Right ventricle myocardium inferior (tissue), 1 donor: ENCODE measurements at regions of chr18 and their contacts with region 1.

Region 1: GRCh38 chr18:63963615-63964256 is 6.1 kb upstream of the SERPINB8 start:
- DNase-seq: no peak
- ATAC-seq: no peak

Region 2: DNA sequence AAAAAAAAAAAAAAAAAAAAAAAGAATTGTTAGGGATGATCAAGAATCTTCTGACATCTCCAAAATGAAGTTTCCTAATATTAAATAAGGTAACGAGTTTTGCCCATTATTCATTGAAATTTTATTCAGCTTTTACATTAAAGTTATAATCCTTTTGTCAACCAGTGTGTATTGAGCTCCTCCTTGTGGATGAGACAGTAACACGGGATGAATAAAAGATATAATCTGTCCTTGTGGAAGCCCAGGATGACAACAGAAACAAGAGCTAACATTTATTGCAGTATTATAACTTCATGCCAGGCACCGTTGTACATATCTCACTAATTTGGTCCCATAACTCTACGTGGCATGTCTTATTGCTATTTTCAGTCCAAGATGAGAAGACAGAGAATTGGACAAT is 222.0 kb before region 1 on chr18:
- intact Hi-C with region 1: no loop called
- DNase-seq: no peak
- ATAC-seq: no peak

Region 3: DNA sequence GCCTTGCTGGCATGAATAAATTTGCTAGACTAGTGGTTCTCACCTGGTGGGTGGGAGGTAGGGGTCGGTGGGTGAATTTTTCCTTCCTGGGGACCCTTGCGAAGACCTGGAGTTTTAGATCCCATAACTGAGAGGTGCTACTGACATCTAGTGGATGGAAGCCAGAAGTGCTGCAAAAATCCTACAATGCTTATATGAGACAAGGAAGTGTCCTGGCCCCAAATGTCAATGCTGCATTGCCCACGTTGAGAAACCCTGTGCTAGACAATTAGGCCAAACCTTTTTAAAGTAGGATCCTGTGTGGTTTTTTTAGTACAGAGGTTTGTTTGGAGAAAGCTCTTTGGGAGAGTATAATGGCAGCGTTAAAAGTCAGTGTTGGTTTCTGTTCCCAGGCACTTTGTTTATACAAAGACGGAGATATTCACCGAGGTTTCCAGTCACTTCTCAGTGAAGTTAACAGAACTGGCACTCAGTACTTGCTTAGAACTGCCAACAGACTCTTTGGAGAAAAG is 15.7 kb after region 1 on chr18:
- intact Hi-C with region 1: loop called (anchors 2 kb)
- DNase-seq: no peak
- ATAC-seq: peak; percentile 85

Region 4: DNA sequence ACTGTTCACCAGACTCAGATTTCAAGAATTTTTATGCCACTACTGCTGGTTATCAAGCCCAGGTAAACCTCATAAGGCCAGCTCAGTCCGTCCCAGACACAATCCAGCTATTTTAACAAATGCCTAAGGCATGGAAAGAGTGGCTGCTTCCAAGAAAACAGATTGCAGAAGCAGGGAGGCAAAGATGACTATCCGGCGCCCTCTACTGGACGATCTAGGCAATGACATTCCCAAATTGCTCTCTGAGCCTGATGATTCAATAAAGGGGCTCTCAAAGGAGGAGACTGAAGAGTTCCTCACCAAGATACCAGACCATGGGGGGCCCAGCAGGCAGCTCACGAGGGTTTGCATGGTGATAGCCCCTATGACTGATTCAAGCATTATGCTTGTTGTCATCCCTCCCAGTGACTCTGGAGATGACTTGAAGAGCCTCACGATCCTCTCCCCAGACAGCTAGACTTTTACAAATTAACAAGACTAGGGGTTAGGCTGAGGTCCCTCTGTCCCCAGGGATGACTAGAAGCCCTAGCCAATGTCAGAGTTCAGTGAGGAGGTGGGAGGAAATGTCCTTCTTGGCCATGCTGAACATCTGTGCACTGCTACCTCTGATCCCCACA is 31.2 kb after region 1 on chr18:
- intact Hi-C with region 1: loop called (anchors 2 kb)
- DNase-seq: no peak
- ATAC-seq: peak; percentile 59